ENCODE measurements at regions of chr14 and their contacts with region 1.

Region 1: GRCh38 chr14:51293149-51293911 is 53.3 kb downstream of the TMX1 start:
- DNase-seq: peak; percentile 37
- H3K4me3 ChIP-seq: no peak overlapping the region
- H3K27ac ChIP-seq: no peak overlapping the region
- H3K4me1 ChIP-seq: peaks cover 14% of the 10 kb centered on the region
- H3K27me3 ChIP-seq: no peaks in the 10 kb centered on the region
- CTCF ChIP-seq: no peak

Region 2: DNA sequence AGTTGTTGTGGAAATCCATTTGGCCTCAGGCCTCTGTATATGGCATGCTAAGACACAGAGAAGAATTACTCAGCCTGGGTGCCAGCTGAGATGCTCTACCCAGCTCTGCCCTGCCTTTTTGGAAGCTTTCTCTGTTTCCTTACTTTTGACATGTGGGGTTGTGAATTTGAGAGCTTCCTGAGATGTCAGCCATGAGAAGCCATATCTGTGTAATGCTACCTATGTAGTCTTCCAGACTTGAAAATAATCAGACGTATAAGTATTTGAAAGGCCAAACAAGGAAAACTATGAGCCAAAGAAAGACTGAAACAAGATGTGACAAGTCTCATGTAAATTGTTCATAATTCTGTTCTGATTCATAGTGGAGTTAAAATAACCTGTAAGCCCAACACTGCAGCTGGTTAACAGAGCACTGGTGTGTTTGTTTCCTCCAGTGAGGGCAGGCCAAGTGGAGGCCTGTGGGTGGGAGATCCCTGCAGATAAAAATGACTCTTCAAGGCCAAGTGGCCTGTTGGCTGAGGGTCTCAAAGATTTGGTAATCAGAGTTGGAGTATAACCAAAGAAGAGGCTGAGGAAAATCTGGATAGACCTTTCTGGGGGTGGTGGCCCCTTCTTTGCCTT is 40.7 kb after region 1 on chr14:
- CTCF ChIA-PET with region 1: no interaction called
- dilution Hi-C with region 1: loop called (anchors 5 kb)
- in situ Hi-C with region 1: no loop called
- intact Hi-C with region 1: no loop called
- DNase-seq: peak; percentile 83
- H3K4me3 ChIP-seq: no peak overlapping the region
- H3K27ac ChIP-seq: peak overlapping the region; percentile 92
- H3K4me1 ChIP-seq: peaks cover 54% of the 10 kb centered on the region
- H3K27me3 ChIP-seq: no peaks in the 10 kb centered on the region
- CTCF ChIP-seq: no peak

Region 3: DNA sequence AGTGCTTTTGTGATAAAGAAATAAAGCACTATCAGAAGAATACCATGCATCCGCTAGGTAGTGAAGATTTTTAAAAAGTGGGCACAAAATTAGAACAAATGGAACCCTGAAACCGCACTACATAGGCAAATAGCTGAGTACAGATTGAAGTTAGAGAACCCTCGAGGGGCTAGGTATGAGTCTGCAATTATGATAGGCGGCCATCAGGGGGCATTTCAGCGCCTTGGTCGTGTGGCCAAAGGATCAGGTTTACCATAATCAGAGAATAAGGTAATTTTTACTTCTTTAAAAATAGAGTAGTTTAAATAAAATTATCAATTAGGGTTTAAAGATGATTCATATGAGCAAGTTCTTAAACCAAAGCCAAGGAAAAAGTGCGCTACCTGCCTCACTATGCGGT is 76.5 kb after region 1 on chr14:
- CTCF ChIA-PET with region 1: no interaction called
- dilution Hi-C with region 1: no loop called
- in situ Hi-C with region 1: loop called in 1 of 2 experiments (anchors 10 kb)
- intact Hi-C with region 1: no loop called
- DNase-seq: no peak
- H3K4me3 ChIP-seq: no peak overlapping the region
- H3K27ac ChIP-seq: no peak overlapping the region
- H3K4me1 ChIP-seq: peaks cover 41% of the 10 kb centered on the region
- H3K27me3 ChIP-seq: no peaks in the 10 kb centered on the region
- CTCF ChIP-seq: peak; percentile 24 to 47

Region 4: GRCh38 chr14:51382506-51382905 is 89.2 kb after region 1 on chr14:
- CTCF ChIA-PET with region 1: no interaction called
- dilution Hi-C with region 1: no loop called
- in situ Hi-C with region 1: loop called in 1 of 2 experiments (anchors 10 kb)
- intact Hi-C with region 1: loop called (anchors 5 kb)
- DNase-seq: peak; percentile 99
- H3K4me3 ChIP-seq: no peak overlapping the region
- H3K27ac ChIP-seq: peak overlapping the region; percentile 92
- H3K4me1 ChIP-seq: peaks cover 49% of the 10 kb centered on the region
- H3K27me3 ChIP-seq: no peaks in the 10 kb centered on the region
- CTCF ChIP-seq: no peak